Stomach (tissue), 19 donors: ENCODE measurements at regions of chr12 and their contacts with region 1.

Region 1: DNA sequence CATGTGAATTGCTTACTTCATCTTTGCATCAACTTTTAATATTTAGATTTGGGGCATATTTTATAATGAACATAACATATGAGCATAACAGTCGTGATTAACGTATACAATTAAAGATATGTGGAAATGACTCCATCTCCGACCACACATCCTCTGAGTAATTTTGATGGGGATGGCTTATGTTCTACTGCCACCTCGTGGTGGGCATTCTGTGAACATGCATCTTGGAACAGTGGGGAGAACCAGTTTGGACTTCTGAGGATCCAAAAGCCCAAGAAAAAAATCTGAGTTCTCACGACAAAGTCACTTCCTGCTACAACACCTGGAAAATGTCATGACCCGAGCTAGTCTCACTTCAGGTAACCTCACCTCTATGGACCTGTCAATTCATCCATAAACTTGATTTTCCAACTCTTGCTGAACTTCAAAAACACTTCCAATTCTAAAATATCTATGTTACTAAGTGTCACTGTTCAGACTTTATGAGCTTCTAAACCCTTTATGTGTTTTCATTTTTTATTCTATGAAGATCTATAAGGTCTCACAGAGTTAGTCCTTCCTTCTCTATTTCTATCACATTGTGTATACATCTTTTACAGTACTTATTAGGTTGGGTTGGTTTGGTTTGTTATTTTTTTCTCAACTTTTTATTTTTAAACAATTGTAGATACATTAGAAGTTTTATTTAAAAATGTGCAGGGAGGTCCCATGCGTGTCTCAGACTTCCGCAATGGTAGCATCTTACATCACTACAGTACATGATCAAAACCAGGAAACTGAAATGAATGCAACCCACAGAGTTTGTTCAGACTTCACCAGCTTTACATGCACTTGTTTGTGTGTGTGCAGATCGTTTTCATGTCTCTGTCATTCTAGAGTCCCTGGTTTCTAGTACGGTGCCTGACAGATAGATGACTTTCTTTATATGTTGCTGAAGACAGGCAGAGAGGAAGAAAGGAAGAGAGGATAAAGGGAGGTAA is 38.2 kb upstream of the STAB2 start:
- DNase-seq: peak; percentile 74 to 88
- H3K4me3 ChIP-seq: no peak overlapping the region
- H3K27ac ChIP-seq: no peak overlapping the region
- H3K4me1 ChIP-seq: no peaks in the 10 kb centered on the region
- H3K27me3 ChIP-seq: peaks cover 0 to 6% (median 0%) of the 10 kb centered on the region in 3 donors
- CTCF ChIP-seq: peak in 5 of 7 experiments; percentile 51 to 83 (median 68)
- EP300 ChIP-seq: no peak
- POLR2A ChIP-seq: no peak

Region 2: DNA sequence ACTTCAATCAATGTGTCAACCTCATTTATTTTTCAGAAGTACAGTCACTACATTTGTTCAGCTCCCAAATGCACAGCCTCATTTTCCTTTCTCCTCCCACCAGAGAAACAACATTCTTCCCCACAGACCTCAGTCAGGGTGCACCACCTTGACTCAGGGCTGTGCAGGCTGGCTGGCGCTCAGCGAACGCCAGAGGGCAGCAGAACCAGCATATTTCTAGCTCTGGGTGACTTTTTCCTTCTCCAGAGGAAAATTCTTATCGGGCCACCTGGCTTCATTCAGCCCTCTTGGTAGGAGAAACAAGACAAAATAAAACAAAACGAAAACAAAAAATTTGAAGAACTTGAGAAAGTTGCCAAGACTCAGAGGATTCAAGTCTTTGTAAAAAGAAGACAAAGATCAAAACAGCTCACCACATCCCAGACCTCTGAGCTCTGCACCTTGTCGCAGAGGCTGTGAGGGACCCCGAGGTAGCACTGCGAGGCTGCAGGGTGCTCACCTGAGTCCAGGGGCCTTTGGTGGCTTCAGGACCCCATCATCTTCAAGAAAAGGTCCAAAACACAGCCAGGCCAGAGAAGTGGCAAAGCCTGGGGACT is 665.6 kb before region 1 on chr12:
- intact Hi-C with region 1: loop called (anchors 5 kb)
- DNase-seq: peak; percentile 60 to 84
- H3K4me3 ChIP-seq: no peak overlapping the region
- H3K27ac ChIP-seq: no peak overlapping the region
- H3K4me1 ChIP-seq: peaks cover 0 to 5% (median 0%) of the 10 kb centered on the region in 4 donors
- H3K27me3 ChIP-seq: peaks cover 0 to 57% (median 17%) of the 10 kb centered on the region in 3 donors
- CTCF ChIP-seq: peak in 5 of 7 experiments; percentile 43 to 77 (median 69)
- EP300 ChIP-seq: no peak
- POLR2A ChIP-seq: no peak

Region 3: GRCh38 chr12:102950107-102950949 is 598.6 kb before region 1 on chr12:
- intact Hi-C with region 1: loop called (anchors 5 kb)
- DNase-seq: peak; percentile 45 to 71
- H3K4me3 ChIP-seq: no peak overlapping the region
- H3K27ac ChIP-seq: no peak overlapping the region
- H3K4me1 ChIP-seq: peaks cover 8 to 17% (median 10%) of the 10 kb centered on the region in 4 donors
- H3K27me3 ChIP-seq: peaks cover 7 to 93% (median 38%) of the 10 kb centered on the region in 3 donors
- CTCF ChIP-seq: peak in 2 of 7 experiments; percentile 19 to 20
- EP300 ChIP-seq: no peak
- POLR2A ChIP-seq: no peak